Right ventricle myocardium inferior (tissue), 1 donor: ENCODE measurements at regions of chr7 and their contacts with region 1.

Region 1: GRCh38 chr7:41705109-41705901 is 2.4 kb upstream of the INHBA start:
- DNase-seq: peak; percentile 92
- ATAC-seq: peak; percentile 92

Region 2: GRCh38 chr7:40329601-40330153 is 1375.6 kb before region 1 on chr7:
- intact Hi-C with region 1: loop called (anchors 2 kb)
- DNase-seq: no peak
- ATAC-seq: peak; percentile 39